ENCODE measurements at regions of chr4 and their contacts with region 1.

Region 1: GRCh38 chr4:152850377-152850776 is 70.6 kb downstream of the ARFIP1 start:
- DNase-seq: peak; percentile 19 to 64
- H3K4me3 ChIP-seq: no peak overlapping the region
- H3K27ac ChIP-seq: peak overlapping the region; percentile 74
- H3K4me1 ChIP-seq: peaks cover 20% of the 10 kb centered on the region
- H3K27me3 ChIP-seq: no peaks in the 10 kb centered on the region
- CTCF ChIP-seq: no peak

Region 2: GRCh38 chr4:152408514-152409327 is 441.7 kb before region 1 on chr4:
- CTCF ChIA-PET with region 1: no interaction called
- POLR2A ChIA-PET with region 1: no interaction called
- intact Hi-C with region 1: loop called (anchors 5 kb)
- DNase-seq: peak in 1 of 2 experiments; percentile 6
- H3K4me3 ChIP-seq: no peak overlapping the region
- H3K27ac ChIP-seq: no peak overlapping the region
- H3K4me1 ChIP-seq: no peaks in the 10 kb centered on the region
- H3K27me3 ChIP-seq: no peaks in the 10 kb centered on the region
- CTCF ChIP-seq: peak; percentile 65

Region 3: DNA sequence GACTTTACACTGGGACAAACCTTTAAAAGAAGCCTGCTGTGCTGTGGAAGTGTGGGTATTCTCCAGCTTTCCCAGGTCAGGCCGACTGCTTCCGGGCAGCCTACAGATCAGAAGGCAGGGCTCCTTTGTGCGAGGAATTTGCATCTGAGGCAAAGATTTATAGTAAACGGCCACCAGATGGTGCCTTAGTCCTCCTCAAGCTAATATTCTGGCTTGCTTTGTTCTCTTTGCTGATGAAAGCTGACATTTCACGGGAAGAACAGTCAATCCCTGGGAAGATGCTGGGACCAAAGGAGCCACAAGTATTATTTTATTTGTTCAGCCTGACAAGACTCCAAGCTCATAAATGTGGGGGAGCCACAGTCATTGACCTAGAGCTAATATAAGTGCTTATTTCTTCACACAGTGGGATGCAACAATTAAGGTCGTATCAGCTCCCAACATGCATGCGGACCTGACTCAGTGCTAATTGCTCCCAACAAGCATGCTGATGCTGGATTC is 233.1 kb after region 1 on chr4:
- CTCF ChIA-PET with region 1: interaction called, 6 read pairs
- POLR2A ChIA-PET with region 1: no interaction called
- intact Hi-C with region 1: loop called (anchors 1 kb)
- DNase-seq: peak; percentile 55 to 66
- H3K4me3 ChIP-seq: no peak overlapping the region
- H3K27ac ChIP-seq: peak overlapping the region; percentile 49; the same call in 1 of the 2 replicates
- H3K4me1 ChIP-seq: peaks cover 18% of the 10 kb centered on the region
- H3K27me3 ChIP-seq: no peaks in the 10 kb centered on the region
- CTCF ChIP-seq: peak; percentile 70

Measured in PC-9 (cell line).